ENCODE measurements at regions of chr11 and their contacts with region 1.

Region 1: DNA sequence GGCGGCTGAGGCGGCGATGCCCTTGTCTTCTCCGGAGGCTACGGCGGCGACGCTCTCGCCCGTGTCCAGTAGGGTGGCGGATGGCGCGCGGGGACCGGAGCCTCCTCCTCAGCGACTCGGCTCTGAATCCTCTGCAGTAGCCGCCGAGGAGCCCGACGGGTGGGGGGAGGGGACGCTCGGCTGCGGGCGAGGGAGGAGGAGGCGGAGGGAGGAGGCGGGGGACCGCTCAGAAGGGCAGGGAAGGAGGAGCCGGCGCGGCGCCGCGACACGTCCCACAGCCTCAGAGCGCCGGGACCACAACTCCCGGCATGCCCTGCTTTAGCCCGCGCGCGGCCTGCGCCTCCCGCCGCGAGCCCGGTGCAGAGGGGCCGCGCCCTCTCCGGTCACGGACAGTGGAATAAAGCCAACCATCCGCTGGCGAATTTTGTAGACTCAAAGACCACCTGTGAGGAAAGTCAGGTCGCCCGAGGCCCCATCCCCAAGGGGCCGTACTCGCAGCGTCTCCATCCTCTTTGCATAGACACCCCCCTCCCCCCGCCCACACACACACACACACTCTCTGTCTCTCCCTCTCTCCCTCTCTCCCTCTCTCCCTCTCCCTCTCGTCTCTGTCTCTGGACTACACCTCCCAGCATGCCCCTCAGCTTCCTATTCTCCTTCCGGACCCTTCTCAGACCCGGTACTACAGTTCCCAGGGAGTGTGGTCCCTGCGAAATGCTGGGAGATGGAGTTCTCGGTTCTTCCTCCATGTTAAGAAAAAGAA is at the start of gene FAM168A:
- DNase-seq: peak; percentile 91 to 95 (median 92)
- H3K4me3 ChIP-seq: peak within 1 kb of the TSS; percentile 54 to 94
- H3K4me3 Mint-ChIP-seq: peak within 1 kb of the TSS; percentile 92 to 96 (median 94)
- H3K27ac ChIP-seq: peak within 1 kb of the TSS; percentile 78
- H3K27ac Mint-ChIP-seq: peak within 1 kb of the TSS; percentile 92 to 98 (median 96)
- H3K4me1 ChIP-seq: peaks cover 24% of the 10 kb centered on the region
- H3K4me1 Mint-ChIP-seq: peaks cover 22 to 39% (median 31%) of the 10 kb centered on the region in 4 donors
- H3K27me3 ChIP-seq: no peaks in the 10 kb centered on the region
- H3K27me3 Mint-ChIP-seq: no peaks in the 10 kb centered on the region
- total RNA-seq, gene FAM168A: 21.9 to 22.7 TPM

Region 2: DNA sequence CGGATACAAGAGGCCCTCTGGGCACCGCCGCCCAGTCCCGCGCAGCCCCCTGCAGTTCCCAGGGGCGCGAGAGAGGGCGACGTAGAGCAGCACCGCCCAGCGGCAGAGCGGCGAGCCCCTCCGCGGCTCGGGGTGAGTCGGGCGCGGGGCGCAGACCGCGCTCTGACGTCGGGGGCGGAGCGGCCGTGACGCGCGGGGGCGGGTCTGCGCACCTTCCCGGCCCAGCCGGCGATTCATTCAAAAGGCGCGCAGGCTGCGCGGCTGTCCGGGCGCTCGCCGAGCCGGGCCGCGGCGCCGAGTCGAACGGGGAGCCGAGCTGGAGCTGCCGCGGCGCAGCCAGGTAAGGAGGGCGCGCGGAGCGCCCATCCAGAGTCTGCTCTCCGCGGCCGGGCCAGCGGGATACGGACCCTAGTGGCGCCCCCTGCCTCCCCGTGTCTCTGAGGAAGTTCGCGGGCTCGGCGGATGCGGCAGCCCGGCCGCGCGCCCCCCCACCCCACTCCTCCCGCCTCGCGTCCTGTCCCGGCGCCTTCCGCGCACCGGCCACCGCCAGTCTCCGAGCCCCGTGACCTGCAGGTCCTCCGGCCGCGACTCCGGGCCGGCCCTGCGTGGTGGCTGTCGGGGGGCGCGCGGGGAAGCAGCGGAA is 221.9 kb before region 1 on chr11 and contains the start of gene RELT:
- CTCF ChIA-PET with region 1: no interaction called
- POLR2A ChIA-PET with region 1: no interaction called
- intact Hi-C with region 1: loop called (anchors 1 kb)
- DNase-seq: peak; percentile 87 to 97 (median 94)
- H3K4me3 ChIP-seq: peak within 1 kb of the TSS; percentile 49 to 86
- H3K4me3 Mint-ChIP-seq: peak within 1 kb of the TSS; percentile 87 to 98 (median 96)
- H3K27ac ChIP-seq: peak within 1 kb of the TSS; percentile 89
- H3K27ac Mint-ChIP-seq: peak within 1 kb of the TSS; percentile 89 to 100 (median 99)
- H3K4me1 ChIP-seq: peaks cover 51% of the 10 kb centered on the region
- H3K4me1 Mint-ChIP-seq: peaks cover 20 to 53% (median 37%) of the 10 kb centered on the region in 4 donors
- H3K27me3 ChIP-seq: no peaks in the 10 kb centered on the region
- H3K27me3 Mint-ChIP-seq: no peaks in the 10 kb centered on the region
- total RNA-seq, gene RELT: 12.1 to 12.9 TPM

Region 3: DNA sequence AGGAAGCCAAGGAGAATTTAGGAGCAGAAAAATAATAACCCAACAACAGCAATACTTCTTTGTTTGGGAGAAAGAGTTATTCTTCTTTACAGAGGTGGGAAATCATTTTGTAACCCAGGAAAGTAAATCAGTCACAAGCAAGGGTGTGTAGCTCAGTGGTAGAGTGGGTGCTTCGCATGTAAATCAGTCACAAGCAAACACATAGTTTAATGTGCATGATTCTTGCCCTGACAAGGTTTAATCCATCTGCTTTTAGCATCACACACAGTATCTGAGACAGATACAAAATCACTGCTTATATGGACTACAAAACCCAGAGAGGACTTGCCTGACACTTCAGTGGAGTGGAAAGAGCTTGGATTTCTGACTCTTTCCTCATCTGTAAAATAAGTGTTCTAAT is 139.9 kb before region 1 on chr11:
- CTCF ChIA-PET with region 1: no interaction called
- POLR2A ChIA-PET with region 1: no interaction called
- intact Hi-C with region 1: no loop called
- DNase-seq: no peak
- H3K4me3 ChIP-seq: no peak overlapping the region
- H3K4me3 Mint-ChIP-seq: no peak overlapping the region
- H3K27ac ChIP-seq: no peak overlapping the region
- H3K27ac Mint-ChIP-seq: no peak overlapping the region
- H3K4me1 ChIP-seq: no peaks in the 10 kb centered on the region
- H3K4me1 Mint-ChIP-seq: peaks cover 0 to 5% (median 1%) of the 10 kb centered on the region in 4 donors
- H3K27me3 ChIP-seq: no peaks in the 10 kb centered on the region
- H3K27me3 Mint-ChIP-seq: no peaks in the 10 kb centered on the region

Region 4: GRCh38 chr11:73570415-73571114 is 27.6 kb before region 1 on chr11:
- CTCF ChIA-PET with region 1: no interaction called
- POLR2A ChIA-PET with region 1: no interaction called
- intact Hi-C with region 1: no loop called
- DNase-seq: no peak
- H3K4me3 ChIP-seq: no peak overlapping the region
- H3K4me3 Mint-ChIP-seq: no peak overlapping the region
- H3K27ac ChIP-seq: no peak overlapping the region
- H3K27ac Mint-ChIP-seq: no peak overlapping the region
- H3K4me1 ChIP-seq: no peaks in the 10 kb centered on the region
- H3K4me1 Mint-ChIP-seq: peaks cover 0 to 5% (median under 1%) of the 10 kb centered on the region in 4 donors
- H3K27me3 ChIP-seq: no peaks in the 10 kb centered on the region
- H3K27me3 Mint-ChIP-seq: no peaks in the 10 kb centered on the region

Region 5: DNA sequence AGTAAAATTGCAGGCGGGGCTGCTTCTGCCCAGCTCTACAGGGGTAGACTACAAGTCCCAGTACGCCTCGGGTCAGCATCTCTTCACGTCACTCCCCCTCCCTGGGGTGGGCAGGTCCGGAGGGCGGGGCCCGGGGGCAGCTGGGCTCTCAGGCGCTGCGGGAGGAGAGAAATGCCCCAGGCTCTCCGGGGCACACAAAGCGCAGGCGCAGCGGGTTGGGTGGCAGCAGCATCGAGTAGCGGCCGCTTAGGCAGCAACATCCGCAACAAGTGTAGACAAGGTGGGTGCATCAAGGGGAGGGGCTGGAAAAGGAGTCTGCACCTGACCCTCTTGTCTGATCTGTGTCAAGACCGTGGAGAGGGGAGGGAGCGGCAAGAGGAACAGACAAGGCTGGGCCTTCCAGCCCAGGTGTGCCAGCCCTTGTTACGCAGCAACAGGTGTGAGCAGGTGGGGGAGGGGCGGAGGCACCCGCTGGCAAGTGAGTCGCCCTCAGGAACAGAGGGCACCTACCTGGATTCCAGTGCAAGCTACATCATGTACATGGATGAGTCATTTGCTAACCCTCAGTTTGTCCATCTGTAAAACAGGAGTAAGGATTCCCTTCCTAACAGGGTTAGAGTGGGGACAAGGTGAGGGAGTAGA is 49.4 kb after region 1 on chr11:
- CTCF ChIA-PET with region 1: interaction called, 3 read pairs
- POLR2A ChIA-PET with region 1: interaction called, 9 read pairs
- intact Hi-C with region 1: loop called (anchors 1 kb)
- DNase-seq: peak; percentile 91 to 94 (median 93)
- H3K4me3 ChIP-seq: peak overlapping the region; percentile 54
- H3K4me3 Mint-ChIP-seq: peak overlapping the region; percentile 83 to 94 (median 91)
- H3K27ac ChIP-seq: peak overlapping the region; percentile 46
- H3K27ac Mint-ChIP-seq: peak overlapping the region; percentile 72 to 98 (median 96)
- H3K4me1 ChIP-seq: peaks cover 8% of the 10 kb centered on the region
- H3K4me1 Mint-ChIP-seq: peaks cover 9 to 24% (median 20%) of the 10 kb centered on the region in 4 donors
- H3K27me3 ChIP-seq: no peaks in the 10 kb centered on the region
- H3K27me3 Mint-ChIP-seq: no peaks in the 10 kb centered on the region

Region 6: GRCh38 chr11:73779084-73779902 is 181.2 kb after region 1 on chr11:
- CTCF ChIA-PET with region 1: no interaction called
- POLR2A ChIA-PET with region 1: interaction called, 4 read pairs
- intact Hi-C with region 1: loop called (anchors 5 kb)
- DNase-seq: peak; percentile 97 to 98 (median 98)
- H3K4me3 ChIP-seq: peak overlapping the region; percentile 58 to 62
- H3K4me3 Mint-ChIP-seq: peak overlapping the region; percentile 91 to 97 (median 94)
- H3K27ac ChIP-seq: peak overlapping the region; percentile 90
- H3K27ac Mint-ChIP-seq: peak overlapping the region; percentile 96 to 100 (median 100)
- H3K4me1 ChIP-seq: peaks cover 5% of the 10 kb centered on the region
- H3K4me1 Mint-ChIP-seq: peaks cover 6 to 13% (median 7%) of the 10 kb centered on the region in 4 donors
- H3K27me3 ChIP-seq: no peaks in the 10 kb centered on the region
- H3K27me3 Mint-ChIP-seq: peaks cover 0 to 4% of the 10 kb centered on the region in 2 donors

Region 7: DNA sequence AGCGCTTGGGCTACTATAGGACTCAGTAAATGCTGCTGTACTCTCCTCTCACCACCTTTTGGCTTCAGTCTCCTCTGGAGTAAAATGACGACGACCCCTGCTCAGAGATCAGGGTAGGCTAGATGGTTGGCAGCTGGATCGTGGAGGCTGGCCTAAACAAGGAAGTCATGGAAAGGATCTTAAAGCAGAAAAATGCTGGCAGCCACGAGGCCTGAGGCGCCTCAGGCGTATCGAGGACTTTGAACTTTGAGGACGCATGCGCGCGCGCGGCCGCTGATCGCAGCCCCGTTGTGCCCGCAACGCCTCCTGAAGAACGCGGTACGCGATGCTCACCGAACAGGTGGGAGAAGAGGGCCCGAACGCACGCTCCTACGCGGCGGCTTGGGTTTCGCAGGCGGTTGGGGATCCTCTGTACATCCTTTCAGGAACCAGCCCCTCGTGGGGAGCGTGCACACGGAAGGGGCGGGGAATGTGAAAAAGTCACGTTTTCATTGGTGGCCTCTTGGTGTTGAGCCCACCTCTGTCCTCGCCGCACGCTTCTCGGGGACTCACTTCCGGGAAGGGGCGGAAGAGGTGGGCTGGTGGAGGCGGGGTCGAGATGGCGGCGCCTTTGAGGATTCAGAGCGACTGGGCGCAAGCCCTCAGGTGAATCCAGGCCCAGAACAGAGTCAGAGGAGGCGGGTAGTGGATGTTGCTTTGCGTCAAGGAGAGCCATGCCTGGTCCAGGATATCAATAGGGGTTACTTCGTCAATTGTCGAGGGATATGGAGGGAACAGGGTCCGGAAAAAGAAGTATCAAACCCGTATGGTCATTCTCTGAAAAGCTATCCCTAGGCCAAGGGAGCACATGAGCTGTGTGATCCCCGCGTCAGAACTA is 278.5 kb after region 1 on chr11 and contains the starts of genes COA4 and PAAF1:
- CTCF ChIA-PET with region 1: no interaction called
- POLR2A ChIA-PET with region 1: no interaction called
- intact Hi-C with region 1: loop called (anchors 5 kb)
- DNase-seq: peak; percentile 93 to 97 (median 94)
- H3K4me3 ChIP-seq: peak within 1 kb of the TSS; percentile 85 to 90
- H3K4me3 Mint-ChIP-seq: peak within 1 kb of the TSS; percentile 98 to 100 (median 100)
- H3K27ac ChIP-seq: peak within 1 kb of the TSS; percentile 86
- H3K27ac Mint-ChIP-seq: peak within 1 kb of the TSS; percentile 95 to 100 (median 99)
- H3K4me1 ChIP-seq: peaks cover 32% of the 10 kb centered on the region
- H3K4me1 Mint-ChIP-seq: peaks cover 16 to 50% (median 31%) of the 10 kb centered on the region in 4 donors
- H3K27me3 ChIP-seq: no peaks in the 10 kb centered on the region
- H3K27me3 Mint-ChIP-seq: no peaks in the 10 kb centered on the region
- total RNA-seq, gene COA4: 59.0 to 61.4 TPM
- total RNA-seq, gene PAAF1: 18.8 to 19.1 TPM

Region 8: GRCh38 chr11:74592441-74593362 is 994.6 kb after region 1 on chr11 and contains the start of gene POLD3:
- CTCF ChIA-PET with region 1: no interaction called
- POLR2A ChIA-PET with region 1: interaction called, 3 read pairs
- intact Hi-C with region 1: loop called (anchors 10 kb)
- DNase-seq: peak; percentile 92 to 96 (median 94)
- H3K4me3 ChIP-seq: peak within 1 kb of the TSS; percentile 66 to 98
- H3K4me3 Mint-ChIP-seq: peak within 1 kb of the TSS; percentile 95 to 100 (median 98)
- H3K27ac ChIP-seq: peak within 1 kb of the TSS; percentile 87
- H3K27ac Mint-ChIP-seq: peak within 1 kb of the TSS; percentile 93 to 99 (median 99)
- H3K4me1 ChIP-seq: peaks cover 22% of the 10 kb centered on the region
- H3K4me1 Mint-ChIP-seq: peaks cover 17 to 33% (median 26%) of the 10 kb centered on the region in 4 donors
- H3K27me3 ChIP-seq: no peaks in the 10 kb centered on the region
- H3K27me3 Mint-ChIP-seq: no peaks in the 10 kb centered on the region
- total RNA-seq, gene POLD3: 15.0 to 16.8 TPM

Measured in CD4-positive, alpha-beta memory T cell (primary cell).